Head of caudate nucleus (tissue), 42 donors: ENCODE measurements at regions of chr2 and their contacts with region 1.

Region 1: DNA sequence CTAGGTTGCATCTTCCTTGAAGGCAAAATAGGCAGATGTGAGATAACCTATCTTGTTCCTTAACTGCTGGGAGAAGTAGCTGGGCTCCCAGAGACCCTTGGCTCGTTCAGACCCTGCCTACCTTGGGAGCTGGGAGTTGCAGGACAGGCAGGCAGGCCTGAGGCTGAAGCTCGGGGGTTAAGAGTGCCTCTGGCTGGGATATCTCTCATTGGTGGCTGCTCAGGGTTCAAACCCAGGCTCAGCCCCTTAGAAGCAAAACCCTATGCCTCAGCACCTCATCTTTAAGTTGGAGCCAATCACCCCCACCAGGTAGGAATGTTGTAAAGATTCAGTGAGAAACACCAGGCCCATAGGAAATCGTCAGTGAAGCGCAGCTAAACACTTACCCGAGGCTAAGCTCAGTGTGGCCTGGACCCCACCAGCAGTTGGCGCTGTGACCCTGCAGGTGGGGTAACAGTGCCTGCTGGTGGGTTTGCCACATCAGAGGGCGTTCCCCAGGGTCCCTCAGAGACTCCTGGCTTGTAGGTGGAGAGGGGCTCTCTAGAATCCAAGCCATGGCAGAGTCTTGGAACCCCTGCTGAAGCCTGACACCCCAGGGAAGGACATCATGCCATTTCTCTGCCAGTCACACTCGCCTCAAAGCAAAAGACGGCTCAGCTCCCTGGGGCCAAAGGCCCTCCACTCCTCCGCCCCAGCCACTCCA is 54.6 kb upstream of the GPR17 start:
- DNase-seq: peak in 41 of 42 donors; percentile 50 to 88 (median 69)

Region 2: GRCh38 chr2:127516031-127516762 is 75.2 kb before region 1 on chr2:
- intact Hi-C with region 1: no loop called
- DNase-seq: peak in 39 of 42 donors; percentile 38 to 86 (median 67)

Region 3: GRCh38 chr2:127695491-127696472 is 104.4 kb after region 1 on chr2:
- intact Hi-C with region 1: loop called (anchors 10 kb)
- DNase-seq: peak in 38 of 42 donors; percentile 45 to 87 (median 70)